ENCODE measurements at regions of chr17 and their contacts with region 1.

Region 1: DNA sequence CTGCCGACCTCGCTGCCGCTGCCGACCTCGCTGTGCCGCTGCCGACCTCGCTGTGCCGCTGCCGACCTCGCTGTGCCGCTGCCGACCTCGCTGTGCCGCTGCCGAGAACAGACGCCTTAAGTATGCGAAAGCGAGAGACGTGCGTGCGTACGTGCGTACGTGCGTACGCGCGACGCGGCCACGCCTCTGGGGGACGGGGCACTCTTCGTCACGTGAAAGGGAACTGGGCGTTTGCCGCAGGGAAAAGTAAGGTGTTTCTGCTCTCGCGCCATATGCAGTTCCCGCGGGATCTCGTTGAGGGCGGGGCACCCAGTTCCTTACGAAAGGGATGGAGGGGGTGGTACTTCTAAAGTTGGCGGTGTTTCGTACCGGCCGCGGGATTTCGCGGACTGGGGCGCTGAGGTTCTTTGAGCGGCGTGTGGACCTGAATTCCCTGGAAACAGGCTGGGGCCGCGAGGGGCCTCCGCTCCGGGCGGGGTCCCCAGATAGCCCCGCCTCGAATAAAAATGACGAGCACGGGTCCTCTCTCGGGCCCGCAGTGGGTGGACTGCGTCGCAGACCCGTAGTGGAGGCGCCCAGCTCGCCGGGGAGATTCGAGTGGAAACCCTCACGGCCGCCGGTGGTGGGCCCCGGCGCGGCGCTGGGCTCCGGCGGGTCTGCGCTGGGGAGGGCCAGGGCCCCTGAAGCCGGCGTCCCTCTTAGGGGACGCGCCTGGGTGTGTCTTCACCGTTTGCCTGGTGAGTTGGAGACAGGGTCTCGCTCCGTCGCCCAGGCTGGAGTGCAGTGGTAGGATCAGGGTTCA is at the start of gene EIF4A3:
- DNase-seq: peak; percentile 97 to 98
- ATAC-seq: peak; percentile 98 to 99
- H3K4me3 ChIP-seq: peak within 1 kb of the TSS; percentile 88 to 95 (median 90)
- H3K27ac ChIP-seq: peak within 1 kb of the TSS; percentile 95 to 98 (median 97)
- H3K4me1 ChIP-seq: peaks cover 15 to 16% of the 10 kb centered on the region in 2 donors
- H3K27me3 ChIP-seq: no peaks in the 10 kb centered on the region
- CTCF ChIP-seq: no peak
- POLR2A ChIP-seq: peak; percentile 93 to 94
- total RNA-seq, gene EIF4A3: 27.4 to 32.8 (median 30.0) TPM

Region 2: DNA sequence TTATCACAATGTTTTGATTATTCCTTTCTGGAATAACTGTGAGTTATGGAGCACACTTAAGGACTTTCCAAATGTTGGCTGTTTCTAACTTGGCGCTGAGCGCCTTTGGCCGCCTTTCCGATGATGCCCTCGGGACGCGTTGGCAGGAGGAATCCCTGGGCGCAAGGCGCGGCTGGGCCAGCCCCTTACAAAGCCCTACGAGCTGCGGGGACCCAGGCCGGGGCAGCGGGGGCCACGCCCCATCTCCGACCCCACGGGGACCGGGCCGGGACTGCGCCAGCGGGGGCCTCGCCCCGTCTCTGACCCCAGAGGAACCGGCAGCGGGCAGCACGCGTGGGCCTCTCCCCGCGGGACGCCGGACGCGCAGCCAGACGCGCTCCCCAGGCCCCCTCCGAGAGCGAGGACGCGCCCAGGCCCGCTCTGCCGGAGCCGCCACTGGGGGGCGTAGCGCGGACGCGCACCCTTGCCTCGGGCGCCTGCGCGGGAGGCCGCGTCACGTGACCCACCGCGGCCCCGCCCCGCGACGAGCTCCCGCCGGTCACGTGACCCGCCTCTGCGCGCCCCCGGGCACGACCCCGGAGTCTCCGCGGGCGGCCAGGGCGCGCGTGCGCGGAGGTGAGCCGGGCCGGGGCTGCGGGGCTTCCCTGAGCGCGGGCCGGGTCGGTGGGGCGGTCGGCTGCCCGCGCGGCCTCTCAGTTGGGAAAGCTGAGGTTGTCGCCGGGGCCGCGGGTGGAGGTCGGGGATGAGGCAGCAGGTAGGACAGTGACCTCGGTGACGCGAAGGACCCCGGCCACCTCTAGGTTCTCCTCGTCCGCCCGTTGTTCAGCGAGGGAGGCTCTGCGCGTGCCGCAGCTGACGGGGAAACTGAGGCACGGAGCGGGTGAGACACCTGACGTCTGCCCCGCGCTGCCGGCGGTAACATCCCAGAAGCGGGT is 46.0 kb before region 1 on chr17 and contains the start of gene GAA:
- in situ Hi-C with region 1: no loop called
- intact Hi-C with region 1: loop called (anchors 1 kb)
- DNase-seq: peak; percentile 59 to 71
- ATAC-seq: peak; percentile 91 to 93
- H3K4me3 ChIP-seq: peak within 1 kb of the TSS; percentile 79 to 93 (median 88)
- H3K27ac ChIP-seq: peak within 1 kb of the TSS; percentile 87 to 90 (median 88)
- H3K4me1 ChIP-seq: peaks cover 9 to 20% of the 10 kb centered on the region in 2 donors
- H3K27me3 ChIP-seq: no peaks in the 10 kb centered on the region
- CTCF ChIP-seq: peak in 4 of 5 experiments; percentile 96 to 99 (median 98)
- POLR2A ChIP-seq: peak; percentile 64 to 81
- total RNA-seq, gene GAA: 39.2 to 72.3 (median 70.1) TPM

Region 3: GRCh38 chr17:80219013-80219762 is 72.0 kb after region 1 on chr17:
- in situ Hi-C with region 1: no loop called
- intact Hi-C with region 1: loop called (anchors 2 kb)
- DNase-seq: peak; percentile 61
- ATAC-seq: peak; percentile 54 to 63
- H3K4me3 ChIP-seq: peak overlapping the region; percentile 69 to 90 (median 78)
- H3K27ac ChIP-seq: peak overlapping the region; percentile 82 to 85 (median 84)
- H3K4me1 ChIP-seq: peaks cover 17 to 18% of the 10 kb centered on the region in 2 donors
- H3K27me3 ChIP-seq: no peaks in the 10 kb centered on the region
- CTCF ChIP-seq: no peak
- POLR2A ChIP-seq: no peak

Region 4: DNA sequence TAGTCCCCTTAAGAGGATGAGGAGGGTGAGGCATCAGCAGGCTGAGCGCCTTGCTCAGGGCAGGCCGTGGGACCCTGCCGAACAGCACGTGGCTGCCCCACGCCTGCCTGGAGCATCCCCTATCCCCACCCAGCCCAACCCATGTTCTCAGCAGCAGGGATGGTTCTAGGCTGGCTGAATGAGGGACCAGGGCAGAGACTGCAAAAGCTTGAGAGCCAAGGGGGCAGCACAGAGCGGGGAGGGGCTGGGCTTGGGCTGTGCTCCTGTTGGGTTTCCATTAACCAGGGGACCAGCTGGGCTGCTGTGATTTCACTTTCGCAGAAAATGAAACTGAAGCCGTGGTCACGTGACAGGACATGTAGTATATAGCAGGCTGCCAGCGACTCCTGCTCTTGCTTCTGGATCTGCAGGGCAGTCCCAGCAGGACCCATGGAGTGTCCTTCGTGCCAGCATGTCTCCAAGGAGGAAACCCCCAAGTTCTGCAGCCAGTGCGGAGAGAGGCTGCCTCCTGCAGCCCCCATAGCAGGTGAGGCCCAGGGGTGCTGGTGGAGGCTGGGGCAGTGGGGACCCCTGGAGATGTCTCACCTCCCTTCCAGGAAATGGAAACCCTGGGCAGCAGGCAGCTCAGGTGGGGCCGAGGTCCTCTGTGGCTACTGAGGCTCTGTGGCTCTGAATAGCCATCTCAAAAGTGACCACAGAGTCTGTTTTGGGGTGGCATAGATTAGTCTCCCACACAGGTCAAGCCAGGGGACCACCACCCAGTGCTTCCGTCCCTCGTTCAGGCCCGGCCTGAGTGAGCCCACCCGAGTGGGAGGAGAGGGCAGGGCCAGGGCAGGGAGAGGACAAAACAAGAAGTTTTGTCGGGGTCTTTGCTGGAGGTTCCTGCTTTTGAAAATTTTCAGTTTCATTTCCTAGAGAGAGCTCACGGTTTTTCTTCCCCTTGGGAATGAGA is 116.3 kb after region 1 on chr17:
- in situ Hi-C with region 1: no loop called
- intact Hi-C with region 1: loop called (anchors 1 kb)
- DNase-seq: peak; percentile 81 to 86
- ATAC-seq: peak; percentile 50 to 66
- H3K4me3 ChIP-seq: peak overlapping the region; percentile 30 to 47 (median 37)
- H3K27ac ChIP-seq: peak overlapping the region; percentile 93 to 100 (median 98)
- H3K4me1 ChIP-seq: peaks cover 24 to 34% of the 10 kb centered on the region in 2 donors
- H3K27me3 ChIP-seq: no peaks in the 10 kb centered on the region
- CTCF ChIP-seq: peak in 1 of 5 experiments; percentile 22
- POLR2A ChIP-seq: peak in 1 of 2 donors; percentile 32

Region 5: DNA sequence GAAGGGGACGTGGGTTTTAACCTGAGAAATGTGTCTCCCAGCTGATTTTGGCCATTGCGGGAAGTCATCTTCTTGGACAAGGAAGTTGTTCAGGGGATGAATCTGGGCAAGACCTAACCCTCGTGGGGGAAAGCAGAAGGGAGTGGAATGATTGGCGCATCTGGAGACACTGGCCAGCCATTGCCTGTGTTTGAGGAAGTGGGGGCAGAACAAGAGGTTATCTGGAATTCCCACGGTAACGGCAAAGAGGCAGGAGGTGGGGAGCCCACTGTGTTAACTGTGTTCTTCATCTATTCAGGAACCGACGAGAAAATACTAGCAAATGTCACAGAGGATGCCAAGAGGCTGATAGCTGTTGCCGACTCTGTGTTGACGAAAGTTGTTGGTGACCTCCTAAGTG is 180.3 kb after region 1 on chr17:
- in situ Hi-C with region 1: no loop called
- intact Hi-C with region 1: no loop called
- DNase-seq: no peak
- ATAC-seq: no peak
- H3K4me3 ChIP-seq: no peak overlapping the region
- H3K27ac ChIP-seq: no peak overlapping the region
- H3K4me1 ChIP-seq: no peaks in the 10 kb centered on the region
- H3K27me3 ChIP-seq: no peaks in the 10 kb centered on the region
- CTCF ChIP-seq: no peak
- POLR2A ChIP-seq: no peak

Region 6: DNA sequence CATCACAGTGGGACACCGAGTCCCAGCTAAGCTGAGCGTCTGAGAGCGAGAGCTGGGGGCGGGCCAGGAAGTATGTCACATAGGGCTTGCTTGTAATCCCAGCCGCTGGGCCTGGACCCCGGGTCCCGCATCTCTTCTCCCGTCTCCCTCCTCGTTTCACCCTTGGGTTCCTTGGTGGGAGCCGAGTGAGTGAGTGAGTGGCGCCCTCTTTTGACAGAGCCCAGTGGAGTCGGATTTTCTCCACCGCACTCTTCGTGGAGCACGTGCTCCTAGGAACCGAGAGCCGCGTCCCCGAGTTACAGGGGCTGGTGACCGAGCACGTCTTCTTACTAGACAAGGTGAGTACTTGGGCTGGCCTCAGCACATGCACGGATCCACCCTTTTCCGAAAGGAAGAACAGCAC is 217.0 kb after region 1 on chr17:
- in situ Hi-C with region 1: no loop called
- intact Hi-C with region 1: loop called (anchors 5 kb)
- DNase-seq: no peak
- ATAC-seq: no peak
- H3K4me3 ChIP-seq: no peak overlapping the region
- H3K27ac ChIP-seq: no peak overlapping the region
- H3K4me1 ChIP-seq: no peaks in the 10 kb centered on the region
- H3K27me3 ChIP-seq: no peaks in the 10 kb centered on the region
- CTCF ChIP-seq: peak in 1 of 5 experiments; percentile 19
- POLR2A ChIP-seq: no peak